Endothelial cell of umbilical vein (primary cell): ENCODE measurements at regions of chr10 and their contacts with region 1.

Region 1: GRCh38 chr10:52308251-52309031 is 5.6 kb upstream of the DKK1 start:
- DNase-seq: peak; percentile 86
- H3K4me3 ChIP-seq: peak overlapping the region; percentile 9 to 65 (median 55)
- H3K27ac ChIP-seq: peak overlapping the region; percentile 55
- H3K4me1 ChIP-seq: peaks cover 9% of the 10 kb centered on the region
- H3K27me3 ChIP-seq: no peaks in the 10 kb centered on the region
- CTCF ChIP-seq: peak; percentile 61 to 72
- POLR2A ChIP-seq: no peak

Region 2: DNA sequence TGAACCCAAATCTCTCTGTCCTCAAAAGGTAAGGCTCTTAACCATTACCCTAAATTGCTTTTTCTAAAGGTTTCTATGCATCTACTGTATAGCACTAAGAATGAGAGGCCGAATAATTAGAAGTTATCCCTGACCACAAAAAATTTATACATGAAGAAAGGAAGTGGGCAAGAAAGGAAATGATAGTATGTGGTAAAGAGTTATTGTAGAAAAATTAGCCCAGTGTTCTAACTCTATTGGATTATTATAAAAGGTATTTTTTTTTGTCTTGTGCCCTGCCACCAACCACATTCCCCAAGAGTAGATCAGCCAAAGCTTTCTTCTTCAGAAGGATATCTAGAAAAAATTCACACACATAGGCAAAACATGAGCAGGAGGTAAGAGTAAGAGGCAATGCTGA is 51.0 kb after region 1 on chr10:
- CTCF ChIA-PET with region 1: no interaction called
- POLR2A ChIA-PET with region 1: no interaction called
- dilution Hi-C with region 1: no loop called
- intact Hi-C with region 1: no loop called
- DNase-seq: no peak
- H3K4me3 ChIP-seq: no peak overlapping the region
- H3K27ac ChIP-seq: no peak overlapping the region
- H3K4me1 ChIP-seq: peaks cover 4% of the 10 kb centered on the region
- H3K27me3 ChIP-seq: no peaks in the 10 kb centered on the region
- CTCF ChIP-seq: no peak
- POLR2A ChIP-seq: no peak

Region 3: DNA sequence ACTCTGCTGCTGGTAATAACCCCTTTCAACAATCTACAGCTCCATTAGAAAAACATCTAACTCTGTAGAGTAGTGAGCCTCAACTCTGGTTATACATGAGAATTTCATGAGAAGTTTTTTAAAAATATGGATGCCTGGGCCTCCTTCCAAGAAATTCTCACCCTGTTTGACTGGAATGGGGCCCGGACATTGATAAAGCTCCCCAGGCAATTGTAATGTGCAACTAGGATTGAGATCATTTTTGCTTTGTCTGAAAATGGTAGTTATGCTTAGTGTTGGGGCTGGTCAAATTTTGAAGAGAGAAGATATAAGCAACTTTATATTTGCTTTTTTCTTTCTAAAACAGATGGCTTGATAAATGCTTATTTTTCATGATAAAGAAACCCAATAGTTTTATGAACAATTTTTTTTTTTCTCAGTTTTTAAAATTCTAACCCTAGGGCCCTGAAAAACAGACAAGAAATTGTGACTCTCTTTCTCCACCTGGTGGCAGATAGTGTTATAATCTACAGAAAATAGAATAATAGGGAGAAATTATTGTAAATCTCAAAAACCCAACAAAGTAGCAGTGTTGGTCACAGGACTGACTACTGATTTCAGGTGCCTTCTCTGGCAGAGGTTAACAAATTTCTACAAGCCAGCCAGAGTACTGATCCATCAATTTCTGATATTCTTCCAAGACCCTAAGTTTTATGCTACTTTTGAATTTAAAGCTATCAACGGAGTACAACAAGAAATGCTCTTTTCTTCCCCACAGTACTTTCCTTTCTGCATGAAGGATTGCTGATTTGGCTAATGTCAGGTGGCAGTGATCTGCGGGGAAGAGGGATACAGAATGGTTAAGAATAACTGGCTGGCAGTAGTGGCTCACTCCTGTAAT is 180.4 kb after region 1 on chr10:
- CTCF ChIA-PET with region 1: interaction called, 630 read pairs
- POLR2A ChIA-PET with region 1: interaction called, 21 read pairs
- dilution Hi-C with region 1: no loop called
- intact Hi-C with region 1: loop called (anchors 1 kb)
- DNase-seq: peak; percentile 67
- H3K4me3 ChIP-seq: no peak overlapping the region
- H3K27ac ChIP-seq: peak overlapping the region; percentile 64
- H3K4me1 ChIP-seq: peaks cover 39% of the 10 kb centered on the region
- H3K27me3 ChIP-seq: no peaks in the 10 kb centered on the region
- CTCF ChIP-seq: peak in 1 of 2 donors; percentile 32
- POLR2A ChIP-seq: no peak

Region 4: GRCh38 chr10:52566471-52567246 is 258.2 kb after region 1 on chr10:
- CTCF ChIA-PET with region 1: interaction called, 279 read pairs
- POLR2A ChIA-PET with region 1: no interaction called
- dilution Hi-C with region 1: no loop called
- intact Hi-C with region 1: loop called (anchors 1 kb)
- DNase-seq: peak; percentile 81
- H3K4me3 ChIP-seq: no peak overlapping the region
- H3K27ac ChIP-seq: no peak overlapping the region
- H3K4me1 ChIP-seq: peaks cover 14% of the 10 kb centered on the region
- H3K27me3 ChIP-seq: no peaks in the 10 kb centered on the region
- CTCF ChIP-seq: peak; percentile 18 to 47
- POLR2A ChIP-seq: no peak

Region 5: GRCh38 chr10:52597189-52597863 is 288.9 kb after region 1 on chr10:
- CTCF ChIA-PET with region 1: interaction called, 15 read pairs
- POLR2A ChIA-PET with region 1: no interaction called
- dilution Hi-C with region 1: no loop called
- intact Hi-C with region 1: no loop called
- DNase-seq: peak; percentile 56
- H3K4me3 ChIP-seq: peak overlapping the region; percentile 4 to 90 (median 50)
- H3K27ac ChIP-seq: peak overlapping the region; percentile 52
- H3K4me1 ChIP-seq: peaks cover 11% of the 10 kb centered on the region
- H3K27me3 ChIP-seq: no peaks in the 10 kb centered on the region
- CTCF ChIP-seq: no peak
- POLR2A ChIP-seq: no peak

Region 6: DNA sequence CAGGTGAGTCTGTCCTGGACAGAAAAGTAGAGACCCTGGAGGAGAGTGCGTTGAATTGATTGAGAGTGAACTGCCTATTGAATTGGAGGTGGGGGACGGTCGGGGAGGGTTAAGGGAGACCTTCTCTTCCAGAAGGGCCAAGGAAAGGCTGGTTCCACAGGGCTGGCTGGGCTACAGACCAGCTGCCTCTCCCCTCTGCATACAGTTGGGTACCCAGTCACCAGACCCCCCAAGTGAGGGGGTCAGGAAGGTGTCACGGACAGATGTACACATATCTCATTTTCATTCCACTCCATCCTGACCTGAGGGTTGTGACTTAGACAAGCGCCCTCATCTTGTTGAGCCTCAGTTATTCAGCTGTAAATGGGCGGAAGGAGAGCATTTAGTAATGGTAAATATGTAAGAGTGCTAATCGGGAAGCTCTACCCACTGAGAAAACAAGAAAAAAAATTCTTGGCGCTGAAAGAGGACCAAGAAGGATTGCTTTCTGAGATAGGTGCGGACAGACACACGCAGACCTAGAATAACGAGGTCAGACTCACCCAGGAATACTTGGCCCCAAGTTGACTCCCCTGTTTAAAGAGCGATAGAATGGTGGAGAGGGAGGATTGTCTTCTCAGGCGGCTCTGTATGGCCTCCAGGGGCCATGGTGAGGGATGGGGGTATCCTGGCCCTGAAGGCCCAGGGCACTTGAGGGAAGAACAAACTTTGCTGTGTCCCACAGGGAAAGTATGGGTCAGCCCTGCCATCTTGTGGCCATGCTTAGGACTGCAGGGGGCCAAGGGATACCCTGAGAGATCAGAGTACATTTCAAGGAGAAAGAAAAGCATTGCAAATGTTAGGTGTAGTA is 471.3 kb after region 1 on chr10:
- CTCF ChIA-PET with region 1: interaction called, 48 read pairs
- POLR2A ChIA-PET with region 1: no interaction called
- dilution Hi-C with region 1: no loop called
- intact Hi-C with region 1: loop called (anchors 1 kb)
- DNase-seq: peak; percentile 70
- H3K4me3 ChIP-seq: no peak overlapping the region
- H3K27ac ChIP-seq: no peak overlapping the region
- H3K4me1 ChIP-seq: no peaks in the 10 kb centered on the region
- H3K27me3 ChIP-seq: peaks cover 5 to 10% of the 10 kb centered on the region in 2 experiments
- CTCF ChIP-seq: peak; percentile 88 to 94
- POLR2A ChIP-seq: no peak

Region 7: DNA sequence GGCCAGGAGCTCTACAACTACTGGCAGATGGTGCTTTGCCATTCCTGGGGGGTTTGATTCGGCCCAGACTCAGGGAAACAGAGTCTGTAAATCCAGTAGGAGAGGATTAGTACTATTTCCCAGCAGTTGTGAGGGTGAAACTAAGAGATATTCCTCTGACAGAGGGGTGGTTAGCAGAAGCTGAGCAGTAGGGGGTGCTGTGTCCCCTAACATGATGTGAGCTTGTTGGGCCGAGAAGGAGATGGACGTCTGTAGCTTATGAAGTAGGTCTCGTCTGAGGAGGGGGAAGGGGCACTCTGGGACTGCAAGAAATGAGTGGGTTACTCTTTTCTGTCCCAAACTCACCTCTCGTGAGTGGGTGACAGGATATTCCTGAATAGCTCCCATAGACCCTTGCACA is 643.4 kb after region 1 on chr10:
- CTCF ChIA-PET with region 1: no interaction called
- POLR2A ChIA-PET with region 1: no interaction called
- dilution Hi-C with region 1: no loop called
- intact Hi-C with region 1: no loop called
- DNase-seq: peak; percentile 73
- H3K4me3 ChIP-seq: no peak overlapping the region
- H3K27ac ChIP-seq: no peak overlapping the region
- H3K4me1 ChIP-seq: no peaks in the 10 kb centered on the region
- H3K27me3 ChIP-seq: no peaks in the 10 kb centered on the region
- CTCF ChIP-seq: peak; percentile 55 to 71
- POLR2A ChIP-seq: no peak